ENCODE measurements at regions of chr11 and their contacts with region 1.

Region 1: DNA sequence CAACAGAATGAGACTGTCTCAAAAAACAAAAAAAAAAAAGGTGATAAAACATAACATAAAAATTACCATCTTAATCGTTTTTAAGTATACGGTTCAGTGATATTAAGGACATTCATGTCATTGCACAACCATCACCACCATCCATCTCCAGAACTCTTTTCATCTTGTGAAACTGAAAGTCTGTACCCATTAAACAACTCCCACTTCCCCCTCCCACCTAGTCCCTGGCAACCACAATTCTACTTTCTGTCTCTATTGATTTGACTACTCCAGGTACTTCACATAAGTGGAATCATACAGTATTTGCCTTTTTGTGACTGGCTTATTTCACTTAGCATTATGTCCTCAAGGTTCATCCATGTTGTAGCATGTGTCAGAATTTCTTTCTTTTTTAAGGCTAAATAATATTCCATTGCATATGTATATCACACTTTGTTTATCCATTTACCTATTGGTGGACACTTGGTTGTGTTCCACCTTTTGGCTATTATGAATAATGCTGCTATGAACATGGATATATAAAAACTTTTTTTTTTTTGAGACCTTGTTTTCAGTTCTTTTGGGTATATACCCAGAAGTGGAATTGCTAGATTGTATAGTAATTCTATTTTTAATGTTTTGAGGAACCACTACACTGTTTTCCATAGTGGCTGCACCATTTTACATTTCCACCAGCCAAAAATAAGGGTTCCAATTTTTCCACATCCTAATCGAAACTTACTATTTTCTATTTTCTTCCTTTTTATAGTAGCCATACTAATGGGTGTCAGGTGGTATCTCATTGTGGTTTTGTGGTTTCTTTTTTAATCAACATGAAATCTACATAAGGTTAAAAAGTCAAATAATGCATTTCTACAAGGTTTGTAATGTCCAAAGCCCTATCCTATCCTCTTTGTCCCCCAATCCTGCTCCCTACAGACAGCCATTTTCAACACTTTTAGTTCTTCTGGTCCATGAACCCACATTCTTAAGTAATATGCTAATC is 23.4 kb upstream of the PIK3C2A start:
- DNase-seq: no peak
- ATAC-seq: no peak
- H3K4me3 ChIP-seq: no peak overlapping the region
- H3K27ac ChIP-seq: no peak overlapping the region
- H3K4me1 ChIP-seq: no peaks in the 10 kb centered on the region
- H3K27me3 ChIP-seq: no peaks in the 10 kb centered on the region
- CTCF ChIP-seq: no peak
- EP300 ChIP-seq: no peak
- POLR2A ChIP-seq: no peak
- RAD21 ChIP-seq: no peak

Region 2: DNA sequence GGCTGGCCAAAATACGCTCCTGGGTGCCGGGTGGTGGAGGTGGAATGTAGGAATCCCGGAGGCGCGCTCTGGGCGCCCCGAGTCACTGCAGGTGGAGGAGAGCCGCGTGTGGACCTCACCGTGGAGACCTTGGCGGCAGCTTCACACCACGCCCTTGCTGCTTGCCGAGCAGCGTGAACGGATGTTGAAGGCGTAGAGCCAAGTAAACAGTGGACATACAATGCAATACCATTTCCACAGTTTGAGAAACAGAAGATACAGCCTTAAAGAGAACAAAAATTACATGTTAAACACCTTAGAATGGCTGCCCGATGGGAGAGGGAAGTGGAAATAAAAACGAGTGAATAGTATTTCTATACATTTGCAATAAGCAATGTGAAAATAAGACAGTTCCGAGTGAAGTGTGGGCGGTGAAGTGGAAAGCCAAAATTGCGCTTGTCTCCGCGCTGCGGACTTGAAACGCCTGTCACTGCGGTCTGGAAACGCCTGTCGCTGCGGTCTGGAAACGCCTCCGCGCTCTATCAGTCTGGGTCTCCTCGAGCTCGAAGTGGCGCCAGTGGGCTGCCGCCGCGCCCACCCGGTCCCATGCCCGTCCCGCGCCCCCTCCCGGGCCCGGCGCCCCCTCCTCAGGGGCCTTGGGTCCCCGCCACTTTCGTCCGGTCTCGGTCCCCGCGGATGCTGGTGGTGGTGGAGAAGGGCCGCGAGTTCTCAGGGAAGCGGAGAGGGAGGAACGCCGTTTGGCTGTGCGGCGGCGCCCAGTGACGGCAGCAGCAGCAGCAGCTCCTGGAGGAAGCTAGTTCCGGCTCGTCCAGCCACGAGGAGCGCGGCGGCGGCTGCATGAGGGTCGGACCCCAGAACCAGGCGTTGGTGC is 122.0 kb after region 1 on chr11:
- CTCF ChIA-PET with region 1: interaction called, 5 read pairs
- POLR2A ChIA-PET with region 1: interaction called, 3 read pairs
- in situ Hi-C with region 1: no loop called
- intact Hi-C with region 1: loop called (anchors 2 kb)
- DNase-seq: peak; percentile 58 to 89 (median 66)
- ATAC-seq: peak; percentile 80
- H3K4me3 ChIP-seq: peak overlapping the region; percentile 63
- H3K27ac ChIP-seq: peak overlapping the region; percentile 74
- H3K4me1 ChIP-seq: peaks cover 7 to 25% of the 10 kb centered on the region in 2 experiments; a peak in 4 of 5 replicates
- H3K27me3 ChIP-seq: no peaks in the 10 kb centered on the region
- CTCF ChIP-seq: no peak
- EP300 ChIP-seq: no peak
- POLR2A ChIP-seq: peak; percentile 88
- RAD21 ChIP-seq: no peak

Region 3: GRCh38 chr11:17504330-17505107 is 273.4 kb after region 1 on chr11:
- CTCF ChIA-PET with region 1: interaction called, 10 read pairs
- POLR2A ChIA-PET with region 1: no interaction called
- in situ Hi-C with region 1: no loop called
- intact Hi-C with region 1: loop called (anchors 2 kb)
- DNase-seq: peak; percentile 53 to 66 (median 63)
- ATAC-seq: peak; percentile 80
- H3K4me3 ChIP-seq: no peak overlapping the region
- H3K27ac ChIP-seq: no peak overlapping the region
- H3K4me1 ChIP-seq: no peaks in the 10 kb centered on the region
- H3K27me3 ChIP-seq: peaks cover 3 to 65% of the 10 kb centered on the region in 2 experiments; a peak in 3 of 5 replicates
- CTCF ChIP-seq: peak; percentile 76 to 77 (median 76)
- EP300 ChIP-seq: no peak
- POLR2A ChIP-seq: no peak
- RAD21 ChIP-seq: peak; percentile 76 to 78

Region 4: DNA sequence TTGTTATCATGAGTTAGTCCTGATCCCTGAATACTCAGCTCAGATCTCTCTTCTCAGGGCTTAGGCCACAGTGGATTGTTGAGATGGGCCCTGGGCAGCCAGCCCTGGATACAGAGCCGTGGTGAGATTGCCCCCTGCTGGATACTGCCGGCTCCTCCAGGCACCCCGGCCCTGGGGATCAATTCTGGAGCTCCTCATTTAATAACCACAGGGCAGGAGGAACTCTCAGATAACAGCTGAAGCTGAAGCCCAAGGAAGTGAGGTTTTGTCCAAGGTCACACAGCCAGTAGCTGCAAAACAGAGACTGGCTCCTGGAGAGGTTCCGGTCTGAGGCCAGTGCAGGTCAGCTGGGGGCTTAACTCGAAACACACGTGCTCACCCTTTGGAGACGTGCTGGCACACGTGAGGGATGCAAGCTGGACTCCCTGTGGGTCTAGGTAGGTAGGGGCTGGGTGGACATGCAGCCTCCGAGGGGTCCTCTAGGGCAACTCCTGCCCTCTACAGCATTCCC is 297.1 kb after region 1 on chr11:
- CTCF ChIA-PET with region 1: interaction called, 5 read pairs
- POLR2A ChIA-PET with region 1: no interaction called
- in situ Hi-C with region 1: loop called (anchors 10 kb)
- intact Hi-C with region 1: loop called (anchors 1 kb)
- DNase-seq: peak; percentile 77 to 88 (median 84)
- ATAC-seq: peak; percentile 98
- H3K4me3 ChIP-seq: no peak overlapping the region
- H3K27ac ChIP-seq: no peak overlapping the region
- H3K4me1 ChIP-seq: peaks cover 0 to 5% of the 10 kb centered on the region in 2 experiments; a peak in 3 of 5 replicates
- H3K27me3 ChIP-seq: peaks cover 21 to 70% of the 10 kb centered on the region in 2 experiments; a peak in 4 of 5 replicates
- CTCF ChIP-seq: peak; percentile 88 to 92 (median 89)
- EP300 ChIP-seq: no peak
- POLR2A ChIP-seq: no peak
- RAD21 ChIP-seq: peak; percentile 89

Measured in K562 (cell line).